ENCODE measurements at regions of chr7 and their contacts with region 1.

Region 1: DNA sequence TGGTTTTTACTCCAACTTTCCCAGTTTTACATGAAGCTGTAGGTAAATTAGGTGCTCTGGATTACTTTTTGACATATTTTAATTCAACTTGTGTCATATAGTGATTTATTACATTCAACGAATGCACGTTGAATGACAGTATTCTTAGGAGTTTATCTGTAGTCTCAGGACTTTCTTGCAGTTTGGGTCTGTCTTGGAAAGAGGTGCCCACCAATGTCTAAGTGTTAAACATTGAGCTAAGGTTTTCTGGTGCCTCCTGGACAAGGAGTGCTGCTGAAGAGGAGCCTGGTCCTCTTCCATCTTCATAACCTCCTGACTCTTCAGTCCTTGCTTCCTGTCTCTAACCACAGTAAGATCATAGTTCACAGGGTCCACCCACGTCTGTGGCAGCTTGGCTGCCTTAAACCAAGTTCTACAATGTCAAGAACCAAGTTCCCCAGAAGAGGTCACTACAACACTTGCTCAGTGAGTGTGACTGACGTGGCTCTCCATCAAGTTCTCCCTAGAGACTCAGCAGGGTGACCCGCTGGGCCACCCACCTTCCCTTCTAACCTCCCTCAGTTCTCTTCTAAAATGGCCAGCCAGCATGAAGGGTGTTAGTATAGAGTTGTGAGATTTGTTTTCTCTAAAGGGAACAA is 6.1 kb downstream of the NPY start:
- DNase-seq: no peak
- H3K4me3 ChIP-seq: no peak overlapping the region
- H3K27ac ChIP-seq: no peak overlapping the region
- H3K4me1 ChIP-seq: no peaks in the 10 kb centered on the region
- H3K27me3 ChIP-seq: no peaks in the 10 kb centered on the region
- CTCF ChIP-seq: peak in 2 of 3 experiments; percentile 23 to 42

Region 2: GRCh38 chr7:23863209-23863798 is 426.8 kb before region 1 on chr7:
- intact Hi-C with region 1: no loop called
- DNase-seq: no peak
- H3K4me3 ChIP-seq: no peak overlapping the region
- H3K27ac ChIP-seq: no peak overlapping the region
- H3K4me1 ChIP-seq: no peaks in the 10 kb centered on the region
- H3K27me3 ChIP-seq: no peaks in the 10 kb centered on the region
- CTCF ChIP-seq: no peak

Region 3: DNA sequence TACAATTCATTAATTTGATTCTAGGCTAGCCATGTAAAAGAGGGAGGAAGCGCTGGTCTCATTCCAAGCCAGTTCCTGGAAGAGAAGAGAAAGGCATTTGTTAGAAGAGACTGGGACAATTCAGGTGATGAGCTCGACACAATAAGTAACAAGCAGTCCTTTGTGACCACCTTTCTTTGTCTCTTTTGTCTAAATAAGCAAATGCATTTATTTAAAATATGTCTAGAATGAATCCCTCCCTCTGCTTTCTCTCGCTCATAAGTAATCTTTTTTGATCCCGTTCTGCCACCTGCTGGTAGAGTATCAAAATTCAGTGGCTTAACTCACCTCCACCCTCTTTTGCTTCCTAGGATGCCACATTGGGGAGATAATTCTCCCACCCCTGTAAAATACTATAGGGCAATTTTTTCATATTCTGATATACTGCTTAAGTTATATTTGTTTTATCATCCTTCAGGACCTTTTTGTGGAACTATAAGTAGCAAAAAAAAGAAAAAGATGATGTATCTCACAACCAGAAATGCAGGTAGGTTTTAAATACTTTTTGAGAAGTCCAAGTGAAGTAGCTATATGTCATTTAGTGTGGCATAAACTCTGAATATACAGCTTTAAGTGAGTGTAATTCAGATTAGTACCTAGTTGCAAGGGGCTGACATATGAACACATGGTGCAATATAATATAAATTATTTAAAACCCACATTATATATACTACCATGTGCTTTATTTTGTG is 375.6 kb after region 1 on chr7:
- intact Hi-C with region 1: loop called (anchors 2 kb)
- DNase-seq: no peak
- H3K4me3 ChIP-seq: no peak overlapping the region
- H3K27ac ChIP-seq: no peak overlapping the region
- H3K4me1 ChIP-seq: no peaks in the 10 kb centered on the region
- H3K27me3 ChIP-seq: no peaks in the 10 kb centered on the region
- CTCF ChIP-seq: peak; percentile 36 to 71 (median 52)

Region 4: DNA sequence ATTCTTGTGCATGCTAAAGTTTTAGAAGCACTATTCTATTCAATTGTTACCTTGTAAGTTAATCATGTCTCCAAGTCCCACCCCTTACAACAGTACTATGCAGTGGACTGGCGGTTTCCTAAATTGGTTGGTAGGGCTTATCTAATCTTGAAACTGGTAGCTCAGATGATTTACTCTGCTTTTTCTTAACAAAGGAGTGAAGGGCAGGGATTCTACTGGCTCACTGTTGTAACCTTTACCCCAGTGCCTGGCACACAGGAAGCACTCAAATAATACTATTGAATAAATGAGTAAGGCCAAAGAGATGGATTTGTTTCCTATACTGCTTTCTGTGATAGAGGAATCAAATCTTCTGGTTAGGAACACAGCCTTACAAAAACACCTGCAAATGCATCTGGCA is 880.9 kb after region 1 on chr7:
- intact Hi-C with region 1: no loop called
- DNase-seq: no peak
- H3K4me3 ChIP-seq: no peak overlapping the region
- H3K27ac ChIP-seq: no peak overlapping the region
- H3K4me1 ChIP-seq: no peaks in the 10 kb centered on the region
- H3K27me3 ChIP-seq: no peaks in the 10 kb centered on the region
- CTCF ChIP-seq: no peak